GM12878 (cell line): ENCODE measurements at regions of chr1 and their contacts with region 1.

Region 1: DNA sequence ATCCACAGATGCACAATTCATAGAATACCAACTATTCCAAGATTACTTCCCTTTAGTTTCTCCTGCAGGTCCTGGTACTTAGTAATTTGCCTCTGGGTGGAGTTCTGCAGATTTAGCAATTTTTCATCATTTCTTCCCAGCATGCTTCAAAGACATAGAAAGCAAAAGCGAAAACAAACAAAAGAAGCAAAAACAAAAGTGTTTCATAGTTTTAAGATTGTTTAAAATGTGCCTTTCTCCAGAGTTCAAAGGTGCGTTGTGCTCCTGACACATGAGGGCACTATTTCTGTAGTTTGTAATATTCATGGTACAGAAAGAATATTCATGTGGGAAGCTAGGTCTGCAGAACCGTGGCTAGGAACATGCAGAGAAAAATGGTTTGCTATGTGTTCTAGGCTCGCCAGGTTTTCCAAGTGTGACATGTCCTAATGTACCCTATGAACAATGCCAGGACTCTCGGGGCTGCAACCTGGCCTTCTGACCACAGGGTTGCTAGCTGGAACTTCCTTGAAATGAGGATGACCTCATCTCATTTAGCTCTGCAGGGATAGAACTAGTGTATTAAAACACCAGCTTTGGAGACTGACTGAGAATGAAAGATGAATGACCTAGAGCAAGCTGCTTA is 30.0 kb upstream of the RCSD1 start:
- DNase-seq: peak; percentile 79
- ATAC-seq: peak; percentile 93
- H3K4me3 ChIP-seq: peak overlapping the region; percentile 4; the same call in 1 of the 2 replicates
- H3K27ac ChIP-seq: peak overlapping the region; percentile 55
- H3K4me1 ChIP-seq: peaks cover 31% of the 10 kb centered on the region
- H3K27me3 ChIP-seq: no peaks in the 10 kb centered on the region
- CTCF ChIP-seq: peak; percentile 58 to 81 (median 80); a peak in 5 of 6 replicates
- EP300 ChIP-seq: no peak
- POLR2A ChIP-seq: no peak
- RAD21 ChIP-seq: peak; percentile 90

Region 2: GRCh38 chr1:167617153-167618147 is 17.4 kb after region 1 on chr1:
- CTCF ChIA-PET with region 1: interaction called, 56 read pairs
- POLR2A ChIA-PET with region 1: interaction called, 8 read pairs
- RAD21 ChIA-PET with region 1: interaction called, 23 read pairs
- SMC1A ChIA-PET with region 1: interaction called, 77 read pairs
- in situ Hi-C with region 1: no loop called
- intact Hi-C with region 1: no loop called
- DNase-seq: peak; percentile 74
- ATAC-seq: peak; percentile 87
- H3K4me3 ChIP-seq: peak overlapping the region; percentile 62
- H3K27ac ChIP-seq: peak overlapping the region; percentile 70
- H3K4me1 ChIP-seq: peaks cover 22% of the 10 kb centered on the region
- H3K27me3 ChIP-seq: no peaks in the 10 kb centered on the region
- CTCF ChIP-seq: no peak
- EP300 ChIP-seq: no peak
- POLR2A ChIP-seq: peak; percentile 58
- RAD21 ChIP-seq: no peak

Region 3: GRCh38 chr1:167669209-167670124 is 69.4 kb after region 1 on chr1:
- CTCF ChIA-PET with region 1: interaction called, 27 read pairs
- POLR2A ChIA-PET with region 1: interaction called, 9 read pairs
- RAD21 ChIA-PET with region 1: interaction called, 34 read pairs
- SMC1A ChIA-PET with region 1: interaction called, 108 read pairs
- in situ Hi-C with region 1: no loop called
- intact Hi-C with region 1: no loop called
- DNase-seq: peak; percentile 66
- ATAC-seq: peak; percentile 73
- H3K4me3 ChIP-seq: no peak overlapping the region
- H3K27ac ChIP-seq: peak overlapping the region; percentile 71
- H3K4me1 ChIP-seq: peaks cover 79% of the 10 kb centered on the region
- H3K27me3 ChIP-seq: no peaks in the 10 kb centered on the region
- CTCF ChIP-seq: 0 out of 6 replicates have a peak, but pooled peaks of 1 of the 3 experiments have one; percentile 3
- EP300 ChIP-seq: no peak
- POLR2A ChIP-seq: no peak
- RAD21 ChIP-seq: no peak

Region 4: DNA sequence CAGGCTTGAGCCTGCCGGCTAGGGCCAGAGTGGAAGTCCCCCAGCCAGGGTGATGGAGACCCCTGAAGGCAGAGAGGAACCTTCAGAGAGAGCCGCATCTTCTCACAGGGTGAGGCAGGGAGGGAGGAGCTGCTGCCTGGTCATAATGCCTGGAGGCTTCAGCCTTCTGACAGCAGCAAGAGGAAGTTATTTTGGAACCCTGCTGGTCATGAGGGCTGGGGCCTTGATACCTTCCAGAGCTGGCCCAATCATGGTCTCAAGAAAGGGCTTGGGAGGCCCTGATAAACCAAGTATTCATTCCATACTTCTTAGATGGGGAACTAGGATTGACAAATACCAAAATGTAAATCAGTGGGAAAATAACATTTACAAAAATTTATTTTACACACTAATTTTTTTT is 95.1 kb after region 1 on chr1:
- CTCF ChIA-PET with region 1: interaction called, 15 read pairs
- POLR2A ChIA-PET with region 1: no interaction called
- RAD21 ChIA-PET with region 1: interaction called, 8 read pairs
- SMC1A ChIA-PET with region 1: interaction called, 12 read pairs
- in situ Hi-C with region 1: no loop called
- intact Hi-C with region 1: no loop called
- DNase-seq: no peak
- ATAC-seq: no peak
- H3K4me3 ChIP-seq: no peak overlapping the region
- H3K27ac ChIP-seq: no peak overlapping the region
- H3K4me1 ChIP-seq: no peaks in the 10 kb centered on the region
- H3K27me3 ChIP-seq: no peaks in the 10 kb centered on the region
- CTCF ChIP-seq: no peak
- EP300 ChIP-seq: no peak
- POLR2A ChIP-seq: no peak
- RAD21 ChIP-seq: no peak

Region 5: DNA sequence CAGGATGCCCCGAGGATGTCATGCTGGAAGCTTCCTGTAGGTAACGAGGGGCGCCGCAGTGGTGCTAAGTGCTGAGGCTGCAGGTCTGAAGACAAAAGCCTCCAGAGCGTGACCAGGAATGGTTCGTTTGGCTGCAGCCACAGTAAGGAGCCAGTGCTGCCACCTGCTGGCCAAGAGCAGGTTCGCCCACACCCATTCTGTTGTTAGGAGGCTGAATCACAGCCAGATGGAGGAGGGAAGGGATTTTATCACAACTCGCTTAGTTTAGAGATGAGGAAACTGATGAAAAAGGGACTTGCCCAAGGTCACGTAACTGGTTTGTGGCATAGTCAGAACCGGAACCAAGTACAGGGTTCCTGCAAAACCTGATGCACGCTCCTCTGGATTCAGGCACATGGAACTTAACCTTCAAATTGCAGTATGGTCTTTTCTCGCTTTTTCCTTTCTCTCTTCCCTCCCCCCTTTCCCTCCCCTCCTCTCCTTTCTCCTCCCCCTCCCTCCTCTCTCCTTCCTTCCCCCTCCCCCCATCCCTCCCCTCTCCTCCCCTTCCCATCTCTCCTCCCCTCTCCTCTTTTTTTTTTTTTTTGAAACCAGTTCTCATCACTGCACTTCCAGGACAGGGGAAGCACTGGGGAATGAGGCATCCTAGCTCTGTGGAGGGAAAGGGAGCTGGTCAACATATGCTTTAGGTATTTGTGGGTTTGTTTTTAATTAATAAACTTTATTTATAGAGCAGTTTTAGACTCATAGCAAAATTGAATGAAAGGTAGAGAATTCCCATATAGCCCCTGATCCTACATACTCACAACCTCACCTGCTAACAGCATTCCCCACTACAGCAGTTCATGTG is 203.5 kb after region 1 on chr1:
- CTCF ChIA-PET with region 1: interaction called, 12 read pairs
- POLR2A ChIA-PET with region 1: no interaction called
- RAD21 ChIA-PET with region 1: interaction called, 5 read pairs
- SMC1A ChIA-PET with region 1: interaction called, 3 read pairs
- in situ Hi-C with region 1: no loop called
- intact Hi-C with region 1: loop called (anchors 2 kb)
- DNase-seq: peak; percentile 82
- ATAC-seq: peak; percentile 100
- H3K4me3 ChIP-seq: no peak overlapping the region
- H3K27ac ChIP-seq: no peak overlapping the region
- H3K4me1 ChIP-seq: peaks cover 12% of the 10 kb centered on the region
- H3K27me3 ChIP-seq: no peaks in the 10 kb centered on the region
- CTCF ChIP-seq: peak; percentile 95 to 100 (median 95); a peak in 5 of 6 replicates
- EP300 ChIP-seq: no peak
- POLR2A ChIP-seq: no peak
- RAD21 ChIP-seq: peak; percentile 84